Activated CD4-positive, alpha-beta memory T cell treated with anti-CD3 and anti-CD28 coated beads for 36 hours (primary cell): ENCODE measurements at regions of chr11 and their contacts with region 1.

Region 1: DNA sequence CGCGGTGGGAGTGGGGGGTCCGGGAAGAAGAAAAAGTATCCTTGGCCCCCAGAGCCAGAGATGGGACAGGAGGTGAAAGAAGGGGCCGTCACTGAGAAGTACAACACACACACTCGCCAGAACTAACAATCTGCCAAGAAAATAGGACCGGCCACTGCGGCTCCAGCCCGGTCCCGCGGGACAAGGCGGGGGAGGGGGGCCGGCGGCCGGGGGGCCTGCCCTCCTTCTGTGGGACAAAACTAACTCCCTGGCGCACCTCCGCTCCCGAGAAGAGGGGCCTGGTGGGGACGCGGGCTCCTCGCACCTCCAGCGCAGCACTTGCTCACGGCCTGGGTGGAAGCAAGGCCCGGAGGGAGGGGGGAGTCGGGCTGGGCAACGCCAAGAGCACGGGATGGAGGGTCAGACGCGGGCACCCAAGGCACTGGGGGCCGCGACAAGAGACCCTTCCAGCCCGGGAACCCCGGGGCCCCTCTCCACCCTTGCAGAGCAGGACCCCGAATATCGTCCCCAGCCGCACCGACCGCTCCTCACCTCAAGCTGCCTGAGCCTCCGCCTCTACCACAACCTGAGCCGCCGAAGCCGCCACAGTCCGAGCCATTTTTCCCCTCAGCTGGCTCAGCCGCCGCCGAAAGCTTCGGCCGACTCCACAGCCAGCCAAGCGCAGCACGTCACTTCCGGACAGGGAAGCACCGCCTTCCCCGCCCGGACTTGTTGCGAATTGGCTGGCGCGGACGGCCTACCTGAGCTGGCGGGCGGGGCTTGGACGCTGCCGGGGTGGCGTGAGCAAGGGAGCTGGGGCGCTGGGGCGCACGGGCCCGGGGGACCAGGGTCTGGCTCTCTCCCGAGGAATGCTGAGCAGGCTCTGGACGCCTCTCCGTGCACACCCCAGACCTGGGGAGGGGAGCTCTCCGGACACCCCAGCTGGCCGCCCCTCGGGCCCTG is at the start of gene PIK3C2A:
- DNase-seq: peak; percentile 96
- H3K4me3 Mint-ChIP-seq: peak within 1 kb of the TSS; percentile 99
- H3K27ac Mint-ChIP-seq: peak within 1 kb of the TSS; percentile 90
- H3K4me1 Mint-ChIP-seq: peaks cover 35% of the 10 kb centered on the region
- H3K27me3 Mint-ChIP-seq: no peaks in the 10 kb centered on the region
- total RNA-seq, gene PIK3C2A: 21.2 to 21.7 TPM

Region 2: GRCh38 chr11:16738193-16738946 is 469.2 kb before region 1 on chr11 and contains the start of gene C11orf58:
- CTCF ChIA-PET with region 1: no interaction called
- POLR2A ChIA-PET with region 1: no interaction called
- intact Hi-C with region 1: loop called (anchors 1 kb)
- DNase-seq: peak; percentile 97
- H3K4me3 Mint-ChIP-seq: no peak within 1 kb of the TSS
- H3K27ac Mint-ChIP-seq: no peak within 1 kb of the TSS
- H3K4me1 Mint-ChIP-seq: peaks cover 22% of the 10 kb centered on the region
- H3K27me3 Mint-ChIP-seq: no peaks in the 10 kb centered on the region
- total RNA-seq, gene C11orf58: 132 to 134 TPM

Region 3: GRCh38 chr11:17102462-17102861 is 105.1 kb before region 1 on chr11:
- CTCF ChIA-PET with region 1: no interaction called
- POLR2A ChIA-PET with region 1: no interaction called
- intact Hi-C with region 1: no loop called
- DNase-seq: no peak
- H3K4me3 Mint-ChIP-seq: no peak overlapping the region
- H3K27ac Mint-ChIP-seq: no peak overlapping the region
- H3K4me1 Mint-ChIP-seq: no peaks in the 10 kb centered on the region
- H3K27me3 Mint-ChIP-seq: no peaks in the 10 kb centered on the region

Region 4: DNA sequence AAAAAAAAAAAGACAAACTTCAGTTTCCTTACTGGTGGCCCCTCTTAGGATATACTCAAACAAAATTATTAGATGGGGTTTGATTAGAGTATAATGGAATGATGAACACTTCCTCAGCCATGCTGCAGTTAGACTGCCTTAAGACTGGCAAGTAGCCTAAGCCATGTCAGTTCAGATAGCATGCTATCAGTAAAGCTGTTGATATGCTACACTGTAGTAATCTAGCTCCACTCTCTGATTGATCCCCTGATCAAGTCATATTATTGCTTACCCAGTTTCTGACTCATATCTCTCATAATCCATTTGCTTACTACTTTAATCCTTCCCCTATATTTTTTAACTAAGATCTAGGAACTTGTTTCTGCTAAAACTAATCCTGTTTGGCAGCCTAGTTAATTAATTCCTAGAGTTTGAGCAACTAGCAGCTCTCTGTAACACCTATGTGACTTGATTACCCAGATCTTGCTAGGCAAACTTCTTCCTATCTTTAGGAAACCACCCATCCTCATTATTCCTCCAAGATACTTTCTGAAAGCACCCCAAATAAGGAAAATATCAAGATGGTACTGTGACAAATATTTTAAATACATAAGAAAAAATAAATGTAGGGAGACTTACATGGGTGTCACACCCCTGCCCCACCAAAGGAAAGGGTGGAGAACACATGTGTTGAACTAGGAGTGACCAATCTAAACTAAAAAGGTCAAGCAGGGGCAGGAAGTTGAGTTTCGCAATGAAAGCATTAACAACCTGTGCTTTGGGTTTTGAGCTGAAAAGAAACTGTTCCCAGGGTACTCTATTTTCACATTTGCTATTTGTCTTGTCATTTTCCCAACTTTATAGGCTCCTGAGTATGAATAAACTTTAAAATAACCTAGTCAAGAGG is 43.0 kb before region 1 on chr11:
- CTCF ChIA-PET with region 1: no interaction called
- POLR2A ChIA-PET with region 1: no interaction called
- intact Hi-C with region 1: loop called (anchors 5 kb)
- DNase-seq: no peak
- H3K4me3 Mint-ChIP-seq: no peak overlapping the region
- H3K27ac Mint-ChIP-seq: no peak overlapping the region
- H3K4me1 Mint-ChIP-seq: peaks cover 45% of the 10 kb centered on the region
- H3K27me3 Mint-ChIP-seq: no peaks in the 10 kb centered on the region

Region 5: DNA sequence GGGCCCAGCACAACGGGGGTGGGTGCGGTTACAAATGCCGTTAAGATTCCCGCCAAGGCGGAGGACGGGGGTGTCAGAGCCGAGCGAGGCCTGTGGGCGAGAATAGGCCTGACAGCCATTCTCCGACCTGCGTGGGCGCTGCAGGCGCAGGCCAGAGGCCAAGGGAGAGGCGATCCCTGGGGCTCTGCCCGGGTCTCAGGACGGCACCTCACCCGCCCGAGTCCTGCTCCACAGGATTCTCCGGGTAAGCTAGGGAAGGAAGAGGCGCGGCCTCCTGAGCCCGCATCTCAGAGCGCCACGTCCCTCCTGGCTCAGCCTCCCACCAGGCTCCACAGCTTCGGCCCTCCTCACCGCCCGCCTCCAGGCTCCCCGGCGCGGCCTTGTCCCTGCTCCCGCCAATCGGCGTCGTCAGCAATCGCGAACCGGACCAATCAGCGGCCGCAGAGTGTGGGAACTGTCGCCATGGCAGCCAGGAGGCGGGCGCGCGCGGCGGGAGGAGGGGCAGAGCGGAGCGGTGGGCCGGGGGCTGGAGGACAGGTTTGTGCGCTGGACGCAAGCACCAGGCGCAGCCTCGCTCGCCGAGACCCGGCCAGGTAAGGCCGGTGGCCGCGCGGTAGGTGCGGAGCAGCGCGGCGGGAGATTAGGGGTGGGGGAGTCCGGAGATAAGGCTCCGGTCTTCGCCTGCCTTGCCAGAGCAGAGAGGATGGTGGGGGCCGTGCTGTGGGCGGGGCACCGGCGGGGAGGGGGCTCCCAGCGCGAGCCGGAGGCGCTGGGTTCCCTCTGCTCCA is 68.8 kb after region 1 on chr11 and contains the start of gene NUCB2:
- CTCF ChIA-PET with region 1: no interaction called
- POLR2A ChIA-PET with region 1: no interaction called
- intact Hi-C with region 1: loop called (anchors 2 kb)
- DNase-seq: peak; percentile 97
- H3K4me3 Mint-ChIP-seq: peak within 1 kb of the TSS; percentile 89
- H3K27ac Mint-ChIP-seq: peak within 1 kb of the TSS; percentile 87
- H3K4me1 Mint-ChIP-seq: peaks cover 32% of the 10 kb centered on the region
- H3K27me3 Mint-ChIP-seq: no peaks in the 10 kb centered on the region
- total RNA-seq, gene NUCB2: 38.1 to 38.2 TPM

Region 6: GRCh38 chr11:17333799-17334586 is 126.4 kb after region 1 on chr11:
- CTCF ChIA-PET with region 1: no interaction called
- POLR2A ChIA-PET with region 1: no interaction called
- intact Hi-C with region 1: no loop called
- DNase-seq: no peak
- H3K4me3 Mint-ChIP-seq: no peak overlapping the region
- H3K27ac Mint-ChIP-seq: no peak overlapping the region
- H3K4me1 Mint-ChIP-seq: no peaks in the 10 kb centered on the region
- H3K27me3 Mint-ChIP-seq: no peaks in the 10 kb centered on the region